ENCODE measurements at regions of chr9 and their contacts with region 1.

Region 1: GRCh38 chr9:14993061-14993800 is 83.0 kb upstream of the FREM1 start:
- DNase-seq: peak; percentile 76
- H3K4me3 Mint-ChIP-seq: peak overlapping the region; percentile 76
- H3K27ac Mint-ChIP-seq: peak overlapping the region; percentile 74
- H3K4me1 Mint-ChIP-seq: peaks cover 30% of the 10 kb centered on the region
- H3K27me3 Mint-ChIP-seq: no peaks in the 10 kb centered on the region

Region 2: GRCh38 chr9:14322211-14323082 is 670.8 kb before region 1 on chr9:
- CTCF ChIA-PET with region 1: no interaction called
- intact Hi-C with region 1: loop called (anchors 2 kb)
- DNase-seq: peak; percentile 82
- H3K4me3 Mint-ChIP-seq: peak overlapping the region; percentile 77
- H3K27ac Mint-ChIP-seq: no peak overlapping the region
- H3K4me1 Mint-ChIP-seq: peaks cover 8% of the 10 kb centered on the region
- H3K27me3 Mint-ChIP-seq: peaks cover 42% of the 10 kb centered on the region

Region 3: DNA sequence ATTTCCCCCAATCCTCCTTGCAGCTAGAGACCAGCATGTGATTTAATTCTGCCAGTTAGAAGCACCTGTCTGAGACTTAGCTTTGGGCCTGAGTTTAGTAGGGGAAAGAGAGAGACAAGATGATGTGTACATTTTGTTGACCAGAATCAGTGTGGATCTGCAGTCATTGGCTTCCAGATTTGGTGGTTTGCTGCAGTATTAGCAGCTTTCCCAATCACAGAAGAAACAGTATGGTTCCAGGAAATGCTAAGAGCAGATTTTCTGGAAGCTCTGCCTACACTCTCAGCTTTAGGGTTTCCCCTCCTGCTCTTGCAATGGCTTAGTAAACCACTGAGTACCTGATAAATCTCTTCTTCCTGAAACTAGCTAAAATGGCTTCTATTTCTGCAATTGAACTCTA is 34.2 kb before region 1 on chr9:
- CTCF ChIA-PET with region 1: no interaction called
- intact Hi-C with region 1: loop called (anchors 1 kb)
- DNase-seq: peak; percentile 54
- H3K4me3 Mint-ChIP-seq: no peak overlapping the region
- H3K27ac Mint-ChIP-seq: peak overlapping the region; percentile 77
- H3K4me1 Mint-ChIP-seq: peaks cover 28% of the 10 kb centered on the region
- H3K27me3 Mint-ChIP-seq: no peaks in the 10 kb centered on the region

Measured in activated naive CD4-positive, alpha-beta T cell treated with anti-CD3 and anti-CD28 coated beads for 36 hours (primary cell).